ENCODE measurements at regions of chr11 and their contacts with region 1.

Region 1: GRCh38 chr11:3217676-3218482 is 734 bp downstream of the MRGPRG start:
- DNase-seq: peak; percentile 40 to 69
- ATAC-seq: no peak
- H3K4me3 ChIP-seq: no peak overlapping the region
- H3K27ac ChIP-seq: no peak overlapping the region
- H3K4me1 ChIP-seq: no peaks in the 10 kb centered on the region
- H3K27me3 ChIP-seq: no peaks in the 10 kb centered on the region

Region 2: GRCh38 chr11:3037040-3037944 is 180.6 kb before region 1 on chr11:
- intact Hi-C with region 1: loop called (anchors 5 kb)
- DNase-seq: peak; percentile 87 to 94
- ATAC-seq: peak; percentile 77
- H3K4me3 ChIP-seq: no peak overlapping the region
- H3K27ac ChIP-seq: no peak overlapping the region
- H3K4me1 ChIP-seq: no peaks in the 10 kb centered on the region
- H3K27me3 ChIP-seq: no peaks in the 10 kb centered on the region

Region 3: GRCh38 chr11:3109921-3110706 is 107.8 kb before region 1 on chr11:
- intact Hi-C with region 1: loop called (anchors 1 to 5 kb)
- DNase-seq: peak; percentile 51 to 84
- ATAC-seq: no peak
- H3K4me3 ChIP-seq: no peak overlapping the region
- H3K27ac ChIP-seq: no peak overlapping the region
- H3K4me1 ChIP-seq: no peaks in the 10 kb centered on the region
- H3K27me3 ChIP-seq: no peaks in the 10 kb centered on the region

Region 4: DNA sequence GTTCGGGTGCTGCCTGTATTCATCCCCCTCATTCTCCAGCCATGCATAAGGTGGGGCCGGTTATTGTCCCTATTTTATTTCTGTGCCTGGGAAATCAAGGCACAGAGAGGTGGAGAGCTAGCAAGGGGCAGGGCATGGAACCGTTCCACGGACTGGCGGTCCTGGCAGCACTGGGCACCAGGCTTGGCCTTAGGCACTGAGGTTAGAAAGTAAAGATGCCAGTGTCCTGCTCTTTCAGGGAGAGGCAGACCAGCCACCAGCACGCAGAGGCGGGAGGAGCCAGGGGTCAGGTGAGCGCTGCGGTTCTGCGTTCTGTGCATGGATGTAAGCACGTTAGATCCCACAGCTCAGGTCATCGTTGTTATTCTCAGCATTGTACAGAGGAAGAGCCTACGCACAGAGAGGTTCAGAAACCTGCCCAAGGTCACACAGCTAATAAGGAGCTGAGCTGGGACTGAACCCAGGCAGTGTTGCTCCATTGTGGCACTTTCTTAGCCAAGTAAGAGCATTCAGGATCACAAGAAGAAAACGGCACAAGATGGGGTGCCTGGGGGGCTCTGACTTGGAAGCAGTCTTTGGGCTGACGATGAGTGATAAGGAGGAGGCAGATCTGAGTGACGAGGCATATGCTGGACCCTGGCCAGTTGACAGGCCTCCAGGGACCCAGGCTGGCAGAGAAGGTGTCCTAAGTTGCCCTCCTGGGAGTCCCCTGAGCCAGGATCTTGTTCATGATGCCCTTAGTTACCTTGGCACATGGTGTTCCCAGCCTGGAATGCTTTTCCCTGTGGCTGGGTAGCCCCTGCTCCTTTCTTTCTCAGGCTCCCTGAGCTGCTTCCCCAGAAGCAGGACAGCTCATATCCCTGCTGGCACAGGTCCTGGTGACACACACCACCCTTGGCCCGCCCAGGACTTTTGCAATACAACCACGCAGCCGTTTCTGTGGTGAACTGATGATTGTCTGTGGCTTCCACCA is 93.8 kb before region 1 on chr11:
- intact Hi-C with region 1: no loop called
- DNase-seq: peak; percentile 92 to 96
- ATAC-seq: peak; percentile 86
- H3K4me3 ChIP-seq: no peak overlapping the region
- H3K27ac ChIP-seq: peak overlapping the region; percentile 6 to 73
- H3K4me1 ChIP-seq: no peaks in the 10 kb centered on the region
- H3K27me3 ChIP-seq: no peaks in the 10 kb centered on the region